CD8-positive, alpha-beta memory T cell (primary cell): ENCODE measurements at regions of chr18 and their contacts with region 1.

Region 1: DNA sequence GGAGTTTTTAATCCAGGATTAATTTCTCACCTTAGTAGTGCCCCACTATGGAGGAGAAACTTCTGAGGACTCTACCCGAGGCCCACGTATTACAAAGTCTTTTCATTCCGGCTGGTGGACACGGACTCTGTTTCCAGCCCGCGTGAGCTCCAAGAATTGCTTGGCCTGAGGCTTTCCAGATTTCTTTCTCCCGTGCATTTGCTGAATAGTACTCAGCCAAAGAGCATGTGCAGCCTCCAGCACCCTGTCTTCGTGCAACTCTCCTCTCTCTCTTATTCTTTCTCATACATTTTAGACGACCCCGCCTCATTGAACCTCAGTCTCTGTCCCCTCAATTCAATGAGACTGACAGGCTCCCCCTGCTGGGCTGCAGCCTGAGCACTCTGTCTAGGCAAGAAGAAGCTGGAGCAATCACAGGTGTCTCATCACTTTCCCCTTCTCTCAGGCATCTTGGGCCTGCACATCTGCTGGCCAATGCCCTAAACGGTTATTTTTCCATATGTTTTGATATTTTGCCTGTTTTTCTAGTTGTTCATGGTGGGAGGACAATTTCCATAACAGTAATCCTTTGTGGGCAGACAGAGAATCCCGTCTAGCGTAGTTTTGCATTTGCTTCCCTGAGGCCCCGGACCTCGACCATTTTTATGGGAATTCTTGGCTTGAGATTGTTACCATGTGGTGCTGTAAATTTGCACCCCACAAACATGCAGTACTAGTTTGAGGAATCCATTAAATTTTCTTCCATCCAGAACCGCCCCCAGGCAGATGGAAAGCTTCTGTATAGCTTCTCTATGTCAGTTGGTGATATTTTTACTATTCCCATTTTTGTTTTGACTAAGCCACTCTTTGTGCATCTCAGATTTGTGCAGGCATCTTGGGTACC is 50.1 kb upstream of the LPIN2 start:
- DNase-seq: peak; percentile 40 to 82 (median 41)
- H3K4me3 ChIP-seq: peak overlapping the region; percentile 62
- H3K4me3 Mint-ChIP-seq: peak overlapping the region; percentile 23 to 92 (median 70)
- H3K27ac ChIP-seq: peak overlapping the region; percentile 83
- H3K27ac Mint-ChIP-seq: peak overlapping the region; percentile 70 to 98 (median 97)
- H3K4me1 ChIP-seq: peaks cover 64% of the 10 kb centered on the region
- H3K4me1 Mint-ChIP-seq: peaks cover 74 to 83% (median 80%) of the 10 kb centered on the region in 3 donors
- H3K27me3 ChIP-seq: no peaks in the 10 kb centered on the region
- H3K27me3 Mint-ChIP-seq: no peaks in the 10 kb centered on the region

Region 2: DNA sequence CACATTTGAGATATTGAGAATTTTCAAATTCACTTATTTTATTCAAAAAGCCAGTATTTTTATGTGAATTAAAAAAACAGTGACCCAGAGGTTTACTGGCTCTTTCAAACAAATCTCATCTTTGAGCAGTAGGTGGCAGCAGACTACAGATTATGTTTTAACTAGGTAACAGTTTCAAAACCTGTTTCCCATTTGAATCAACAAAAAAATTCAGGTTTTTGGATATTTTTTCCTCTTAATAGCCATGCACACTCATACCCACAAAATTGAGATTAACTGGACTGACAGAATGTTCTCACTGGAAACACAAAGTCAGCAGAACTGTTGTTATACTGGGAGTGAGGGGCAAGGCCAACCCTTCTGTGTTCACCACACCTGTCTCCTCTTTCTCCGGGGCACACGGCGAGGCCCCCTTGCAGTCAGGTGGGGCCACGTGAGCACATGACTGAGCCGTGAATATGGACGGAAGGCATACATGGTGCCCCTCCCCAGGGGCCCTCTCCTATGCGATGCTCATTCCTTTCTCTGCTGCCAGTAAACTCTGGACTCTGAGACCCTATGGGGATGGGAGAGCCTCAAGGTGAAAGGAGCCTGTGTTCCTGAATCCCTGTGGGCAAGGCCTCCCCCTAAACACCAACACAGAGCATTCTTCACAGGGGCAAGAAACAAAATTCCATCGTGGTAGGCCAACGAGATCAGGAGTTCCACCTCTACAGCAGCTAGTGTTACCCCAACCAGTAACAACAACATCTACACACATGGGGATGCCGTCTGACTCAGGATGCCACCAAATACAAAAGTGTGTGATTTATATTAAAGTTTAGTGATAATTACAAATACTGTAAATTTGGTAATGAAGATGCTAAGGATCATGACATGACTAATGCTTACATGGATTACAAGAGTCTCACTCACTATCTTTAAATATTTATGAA is 130.5 kb before region 1 on chr18:
- CTCF ChIA-PET with region 1: interaction called, 10 read pairs
- POLR2A ChIA-PET with region 1: no interaction called
- DNase-seq: peak in 4 of 5 donors; percentile 22 to 69 (median 60)
- H3K4me3 ChIP-seq: no peak overlapping the region
- H3K4me3 Mint-ChIP-seq: peak overlapping the region in 4 of 7 donors; percentile 8 to 42 (median 20)
- H3K27ac ChIP-seq: no peak overlapping the region
- H3K27ac Mint-ChIP-seq: peak overlapping the region; percentile 85 to 96 (median 91)
- H3K4me1 ChIP-seq: peaks cover 9% of the 10 kb centered on the region
- H3K4me1 Mint-ChIP-seq: peaks cover 29 to 47% (median 45%) of the 10 kb centered on the region in 3 donors
- H3K27me3 ChIP-seq: no peaks in the 10 kb centered on the region
- H3K27me3 Mint-ChIP-seq: no peaks in the 10 kb centered on the region

Region 3: DNA sequence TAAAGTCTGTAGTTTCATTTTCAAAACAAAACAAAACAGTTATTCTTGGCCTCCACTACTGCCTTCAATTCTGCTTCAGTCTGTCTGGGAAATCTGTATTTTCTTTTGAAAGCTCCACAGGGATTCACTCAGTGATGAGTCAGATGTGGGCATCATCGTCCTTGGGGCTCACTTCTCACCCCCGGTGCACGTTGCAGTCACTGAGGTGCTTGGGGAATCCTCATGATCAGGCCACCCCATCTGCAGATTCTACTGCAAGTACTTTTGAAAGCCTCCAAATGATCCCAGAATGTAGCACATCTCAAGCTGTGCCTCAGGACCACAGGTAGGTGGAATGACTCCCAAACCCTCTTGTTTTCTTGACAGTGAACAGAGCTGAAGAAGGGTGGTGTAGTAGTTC is 84.4 kb before region 1 on chr18:
- CTCF ChIA-PET with region 1: interaction called, 23 read pairs
- POLR2A ChIA-PET with region 1: interaction called, 4 read pairs
- DNase-seq: peak in 2 of 5 donors; percentile 16 to 18
- H3K4me3 ChIP-seq: peak overlapping the region; percentile 63
- H3K4me3 Mint-ChIP-seq: peak overlapping the region; percentile 75 to 92 (median 87)
- H3K27ac ChIP-seq: peak overlapping the region; percentile 5
- H3K27ac Mint-ChIP-seq: peak overlapping the region; percentile 78 to 99 (median 96)
- H3K4me1 ChIP-seq: peaks cover 76% of the 10 kb centered on the region
- H3K4me1 Mint-ChIP-seq: peaks cover 69 to 94% (median 94%) of the 10 kb centered on the region in 3 donors
- H3K27me3 ChIP-seq: no peaks in the 10 kb centered on the region
- H3K27me3 Mint-ChIP-seq: no peaks in the 10 kb centered on the region

Region 4: DNA sequence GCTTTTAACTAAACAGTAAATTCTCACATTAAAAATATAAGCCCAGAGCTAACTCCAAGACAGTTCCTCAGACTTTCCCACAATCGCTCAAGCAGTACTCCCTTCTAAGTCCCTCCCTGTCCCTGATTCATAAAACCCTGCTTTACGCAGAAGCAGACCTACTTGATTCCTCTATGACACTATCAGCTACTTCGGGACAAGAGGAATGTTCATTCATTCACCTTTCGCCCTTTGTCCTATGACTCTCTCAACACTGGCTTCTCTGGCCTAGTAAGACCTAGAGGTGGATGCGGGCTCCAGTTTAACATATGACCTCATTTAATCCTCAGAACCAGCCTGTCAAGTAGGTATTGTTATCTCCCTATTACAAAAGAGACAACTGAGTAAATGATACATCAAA is 60.3 kb before region 1 on chr18:
- CTCF ChIA-PET with region 1: interaction called, 144 read pairs
- POLR2A ChIA-PET with region 1: interaction called, 4 read pairs
- DNase-seq: no peak
- H3K4me3 ChIP-seq: no peak overlapping the region
- H3K4me3 Mint-ChIP-seq: no peak overlapping the region
- H3K27ac ChIP-seq: no peak overlapping the region
- H3K27ac Mint-ChIP-seq: peak overlapping the region in 7 of 8 donors; percentile 14 to 87 (median 64)
- H3K4me1 ChIP-seq: peaks cover 28% of the 10 kb centered on the region
- H3K4me1 Mint-ChIP-seq: peaks cover 68 to 86% (median 86%) of the 10 kb centered on the region in 3 donors
- H3K27me3 ChIP-seq: no peaks in the 10 kb centered on the region
- H3K27me3 Mint-ChIP-seq: no peaks in the 10 kb centered on the region

Region 5: DNA sequence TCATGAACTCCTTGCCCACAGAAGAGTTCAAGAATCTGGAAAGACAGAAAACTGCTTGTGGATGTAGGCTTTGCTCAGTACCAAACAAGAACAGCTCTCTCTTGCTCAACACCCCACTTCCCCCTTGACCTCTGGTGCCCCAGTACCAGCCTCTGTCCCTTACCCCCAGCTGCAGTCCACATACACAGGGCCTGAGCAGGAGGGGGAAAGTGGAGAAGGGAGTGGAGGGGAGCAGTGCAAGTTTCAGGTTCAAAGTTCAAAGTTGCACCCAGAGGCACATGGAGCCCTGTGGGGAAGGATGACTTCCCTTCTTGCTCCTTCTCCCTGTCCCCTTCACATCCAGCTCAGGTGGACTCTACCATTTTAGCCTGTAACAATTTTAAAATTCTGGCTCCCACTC is 11.0 kb after region 1 on chr18:
- CTCF ChIA-PET with region 1: interaction called, 44 read pairs
- POLR2A ChIA-PET with region 1: interaction called, 4 read pairs
- DNase-seq: no peak
- H3K4me3 ChIP-seq: no peak overlapping the region
- H3K4me3 Mint-ChIP-seq: no peak overlapping the region
- H3K27ac ChIP-seq: no peak overlapping the region
- H3K27ac Mint-ChIP-seq: peak overlapping the region in 1 of 8 donors; percentile 22
- H3K4me1 ChIP-seq: peaks cover 12% of the 10 kb centered on the region
- H3K4me1 Mint-ChIP-seq: peaks cover 21 to 42% (median 30%) of the 10 kb centered on the region in 3 donors
- H3K27me3 ChIP-seq: no peaks in the 10 kb centered on the region
- H3K27me3 Mint-ChIP-seq: no peaks in the 10 kb centered on the region

Region 6: GRCh38 chr18:3245853-3246634 is 183.0 kb after region 1 on chr18:
- CTCF ChIA-PET with region 1: interaction called, 42 read pairs
- POLR2A ChIA-PET with region 1: interaction called, 6 read pairs
- DNase-seq: peak; percentile 62 to 83 (median 69)
- H3K4me3 ChIP-seq: peak overlapping the region; percentile 96
- H3K4me3 Mint-ChIP-seq: peak overlapping the region; percentile 92 to 98 (median 94)
- H3K27ac ChIP-seq: peak overlapping the region; percentile 96
- H3K27ac Mint-ChIP-seq: peak overlapping the region; percentile 91 to 98 (median 97)
- H3K4me1 ChIP-seq: peaks cover 23% of the 10 kb centered on the region
- H3K4me1 Mint-ChIP-seq: peaks cover 33 to 53% (median 45%) of the 10 kb centered on the region in 3 donors
- H3K27me3 ChIP-seq: no peaks in the 10 kb centered on the region
- H3K27me3 Mint-ChIP-seq: peaks cover 0 to 2% of the 10 kb centered on the region in 2 donors